ENCODE measurements at regions of chr10 and their contacts with region 1.

Region 1: DNA sequence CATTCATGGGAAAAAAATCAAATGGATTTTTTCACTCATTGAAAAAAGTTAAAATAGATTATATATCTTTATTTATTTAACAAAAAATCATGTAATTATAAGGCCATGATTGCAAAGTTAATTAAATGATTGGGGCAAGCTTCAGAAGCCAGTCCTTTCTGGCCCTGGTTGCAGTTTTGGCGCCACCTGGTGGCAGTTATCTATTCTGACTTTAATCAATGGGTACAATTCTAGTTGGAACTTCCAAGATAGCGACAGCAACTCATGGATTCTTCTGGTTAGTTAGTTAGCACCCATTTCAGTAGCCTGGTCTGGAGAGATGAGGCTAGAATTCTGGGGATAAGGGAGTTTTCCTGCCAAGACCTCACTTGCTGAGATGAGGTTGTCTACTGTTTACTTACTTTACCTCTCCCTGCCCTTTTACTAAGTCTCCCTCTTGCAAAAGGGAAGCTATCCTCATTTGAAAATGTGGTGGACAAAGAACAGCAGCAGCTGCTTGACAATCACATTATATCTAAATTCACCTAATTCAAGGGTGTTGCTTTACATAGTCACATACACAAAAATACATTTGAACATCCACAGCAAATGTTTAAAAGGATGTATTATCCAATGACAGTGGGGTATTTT is 42.3 kb downstream of the NOC3L start:
- DNase-seq: peak; percentile 43
- H3K4me3 ChIP-seq: no peak overlapping the region; a peak in 1 of 4 replicates
- H3K27ac ChIP-seq: no peak overlapping the region; a peak in 1 of 4 replicates
- H3K4me1 ChIP-seq: no peaks in the 10 kb centered on the region
- H3K27me3 ChIP-seq: no peaks in the 10 kb centered on the region
- CTCF ChIP-seq: peak; percentile 87
- EP300 ChIP-seq: no peak
- RAD21 ChIP-seq: peak; percentile 89

Region 2: GRCh38 chr10:93893646-93894515 is 426.5 kb before region 1 on chr10 and contains the start of gene SLC35G1:
- CTCF ChIA-PET with region 1: interaction called, 13 read pairs
- POLR2A ChIA-PET with region 1: no interaction called
- DNase-seq: peak; percentile 95
- H3K4me3 ChIP-seq: peak within 1 kb of the TSS; percentile 69 to 88
- H3K27ac ChIP-seq: peak within 1 kb of the TSS in 1 of 2 experiments; percentile 79; a peak in 2 of 4 replicates
- H3K4me1 ChIP-seq: peaks cover 8 to 12% of the 10 kb centered on the region in 2 experiments; a peak in 3 of 4 replicates
- H3K27me3 ChIP-seq: no peaks in the 10 kb centered on the region
- CTCF ChIP-seq: no peak
- EP300 ChIP-seq: no peak
- RAD21 ChIP-seq: no peak
- polyA plus RNA-seq, gene SLC35G1: 5.1 and 7.3 TPM in 2 replicates

Region 3: DNA sequence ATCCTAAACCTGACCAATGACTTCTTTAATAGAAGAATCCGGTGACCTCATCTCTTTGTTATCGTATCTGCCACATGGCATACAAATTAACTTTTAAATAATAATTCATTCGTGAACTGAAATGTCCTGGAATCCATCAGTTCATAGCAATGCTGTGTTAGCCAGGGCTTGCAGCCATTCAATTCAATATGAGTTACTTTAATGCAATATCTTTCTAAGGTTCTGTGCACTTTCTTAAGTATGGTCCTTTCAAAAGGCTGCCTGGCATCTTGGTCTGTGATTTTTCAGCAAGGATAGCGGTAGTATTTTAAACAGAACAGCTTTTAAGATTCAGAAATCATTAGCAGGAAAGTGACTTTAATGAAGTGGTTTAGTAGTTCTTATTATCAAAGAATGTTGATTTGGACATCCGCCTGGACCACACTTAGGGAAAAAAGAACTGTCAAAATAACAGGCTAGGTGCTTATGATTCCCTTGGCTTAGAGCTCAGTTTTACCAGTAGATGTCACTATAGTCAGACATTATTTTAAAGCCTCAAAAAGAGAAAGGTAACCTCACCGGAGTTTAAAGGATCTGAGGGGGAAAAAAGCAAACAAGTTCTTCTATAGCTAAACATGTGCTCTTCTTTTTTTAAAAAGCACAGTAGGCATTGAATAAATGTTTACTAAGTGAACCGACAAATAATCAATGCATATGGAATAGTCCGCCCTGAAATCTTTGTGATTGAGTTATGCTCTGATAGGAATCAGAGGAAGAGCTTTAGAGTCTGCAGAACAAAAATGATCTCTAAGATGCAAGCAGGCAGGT is 403.9 kb before region 1 on chr10:
- CTCF ChIA-PET with region 1: interaction called, 118 read pairs
- POLR2A ChIA-PET with region 1: interaction called, 6 read pairs
- DNase-seq: peak; percentile 34
- H3K4me3 ChIP-seq: no peak overlapping the region
- H3K27ac ChIP-seq: no peak overlapping the region
- H3K4me1 ChIP-seq: peaks cover 0 to 3% of the 10 kb centered on the region in 2 experiments; a peak in 1 of 4 replicates
- H3K27me3 ChIP-seq: no peaks in the 10 kb centered on the region
- CTCF ChIP-seq: peak; percentile 81
- EP300 ChIP-seq: no peak
- RAD21 ChIP-seq: peak; percentile 80

Region 4: DNA sequence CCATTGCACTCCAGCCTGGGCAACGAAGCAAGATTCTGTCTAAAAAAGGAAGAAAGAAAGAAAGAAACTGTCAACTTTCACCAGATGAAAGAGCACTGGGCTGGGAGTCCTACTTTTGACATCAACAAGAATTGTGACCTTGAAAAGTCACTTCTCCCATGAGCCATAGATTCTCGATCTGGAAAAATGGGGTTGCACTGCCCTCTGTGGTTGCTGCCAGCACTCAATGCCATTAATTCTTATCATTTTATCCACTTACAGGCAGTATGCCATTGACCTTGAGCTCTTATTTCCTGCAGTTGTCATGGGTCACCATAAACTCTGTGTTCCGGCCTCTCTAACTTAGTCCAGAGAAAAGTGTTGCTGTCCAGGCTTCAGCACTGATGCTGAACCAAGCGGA is 94.8 kb before region 1 on chr10:
- CTCF ChIA-PET with region 1: interaction called, 10 read pairs
- POLR2A ChIA-PET with region 1: no interaction called
- DNase-seq: no peak
- H3K4me3 ChIP-seq: no peak overlapping the region
- H3K27ac ChIP-seq: no peak overlapping the region
- H3K4me1 ChIP-seq: peaks cover 10% of the 10 kb centered on the region in 2 experiments; a peak in 2 of 4 replicates
- H3K27me3 ChIP-seq: no peaks in the 10 kb centered on the region
- CTCF ChIP-seq: peak; percentile 44
- EP300 ChIP-seq: no peak
- RAD21 ChIP-seq: peak; percentile 57

Region 5: DNA sequence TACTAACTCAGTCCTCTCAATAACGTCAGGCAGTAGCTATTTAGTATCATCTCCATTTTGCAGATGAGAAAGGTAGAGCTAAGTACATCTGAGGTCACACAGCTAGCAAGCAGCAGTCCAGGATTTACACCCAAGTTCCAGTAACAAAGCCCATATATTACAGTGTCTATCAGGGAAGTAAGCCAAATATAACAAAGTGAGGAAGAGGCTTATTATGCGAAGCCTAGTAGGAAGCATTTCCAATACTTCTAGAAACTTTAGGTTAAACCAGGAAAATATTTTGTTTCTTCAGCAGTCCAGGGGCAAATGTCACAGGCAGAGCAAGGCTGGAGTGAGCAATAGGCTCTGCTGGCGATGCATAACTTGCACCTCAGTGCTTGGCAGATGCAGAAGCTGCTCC is 11.5 kb before region 1 on chr10:
- CTCF ChIA-PET with region 1: interaction called, 59 read pairs
- POLR2A ChIA-PET with region 1: no interaction called
- DNase-seq: no peak
- H3K4me3 ChIP-seq: no peak overlapping the region
- H3K27ac ChIP-seq: no peak overlapping the region
- H3K4me1 ChIP-seq: no peaks in the 10 kb centered on the region
- H3K27me3 ChIP-seq: no peaks in the 10 kb centered on the region
- CTCF ChIP-seq: no peak
- EP300 ChIP-seq: no peak
- RAD21 ChIP-seq: no peak

Region 6: DNA sequence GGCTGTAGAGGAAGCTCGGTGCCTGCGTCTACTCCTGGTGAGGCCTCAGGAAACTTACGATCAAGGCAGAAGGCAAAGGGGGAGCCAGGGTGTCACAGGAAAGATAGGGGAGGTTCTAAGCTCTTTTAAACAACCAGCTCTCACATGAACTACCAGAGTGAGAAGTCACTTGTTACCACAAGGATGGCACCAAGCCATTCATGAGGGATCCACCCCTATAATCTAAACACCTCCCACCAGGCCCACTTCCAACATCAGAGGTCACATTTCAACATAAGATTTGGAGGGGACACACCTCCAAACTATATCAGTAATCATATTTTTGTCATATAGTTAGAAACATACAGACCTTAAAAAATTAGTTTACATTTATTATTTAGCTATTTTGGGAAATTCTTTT is 32.9 kb after region 1 on chr10:
- CTCF ChIA-PET with region 1: interaction called, 25 read pairs
- POLR2A ChIA-PET with region 1: no interaction called
- DNase-seq: no peak
- H3K4me3 ChIP-seq: no peak overlapping the region
- H3K27ac ChIP-seq: no peak overlapping the region
- H3K4me1 ChIP-seq: no peaks in the 10 kb centered on the region; a peak in 1 of 4 replicates
- H3K27me3 ChIP-seq: no peaks in the 10 kb centered on the region
- CTCF ChIP-seq: no peak
- EP300 ChIP-seq: no peak
- RAD21 ChIP-seq: no peak

Region 7: DNA sequence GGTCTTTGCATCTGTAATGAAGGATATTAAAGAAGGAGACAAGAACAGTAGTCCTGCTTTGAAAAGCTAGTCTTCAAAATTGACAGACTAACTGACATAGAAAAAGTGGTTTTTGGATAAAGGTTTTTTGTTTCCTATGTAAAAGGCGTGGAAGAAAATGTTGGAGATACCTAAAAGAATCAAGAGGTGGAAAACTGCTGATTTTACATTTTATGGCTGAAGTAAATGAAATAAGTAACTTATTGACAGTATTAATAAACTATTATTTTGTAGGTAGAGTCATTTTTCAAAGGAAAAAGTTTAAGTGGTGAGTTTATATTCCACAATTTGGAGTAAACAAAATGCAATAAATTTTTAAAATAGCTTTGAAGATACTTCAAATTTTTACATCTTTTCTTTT is 212.6 kb after region 1 on chr10:
- CTCF ChIA-PET with region 1: no interaction called
- POLR2A ChIA-PET with region 1: no interaction called
- DNase-seq: no peak
- H3K4me3 ChIP-seq: no peak overlapping the region
- H3K27ac ChIP-seq: no peak overlapping the region
- H3K4me1 ChIP-seq: no peaks in the 10 kb centered on the region
- H3K27me3 ChIP-seq: no peaks in the 10 kb centered on the region
- CTCF ChIP-seq: no peak
- EP300 ChIP-seq: no peak
- RAD21 ChIP-seq: no peak

Region 8: GRCh38 chr10:94666391-94667102 is 346.1 kb after region 1 on chr10:
- CTCF ChIA-PET with region 1: no interaction called
- POLR2A ChIA-PET with region 1: no interaction called
- DNase-seq: no peak
- H3K4me3 ChIP-seq: no peak overlapping the region
- H3K27ac ChIP-seq: no peak overlapping the region
- H3K4me1 ChIP-seq: no peaks in the 10 kb centered on the region
- H3K27me3 ChIP-seq: no peaks in the 10 kb centered on the region
- CTCF ChIP-seq: no peak
- EP300 ChIP-seq: no peak
- RAD21 ChIP-seq: no peak

Measured in SK-N-SH (cell line).